Cardiac septum (tissue), 1 donor: ENCODE measurements at regions of chr6 and their contacts with region 1.

Region 1: GRCh38 chr6:138987640-138988468 is at the start of gene REPS1:
- DNase-seq: peak; percentile 95
- total RNA-seq, gene REPS1: 43.0 TPM

Region 2: DNA sequence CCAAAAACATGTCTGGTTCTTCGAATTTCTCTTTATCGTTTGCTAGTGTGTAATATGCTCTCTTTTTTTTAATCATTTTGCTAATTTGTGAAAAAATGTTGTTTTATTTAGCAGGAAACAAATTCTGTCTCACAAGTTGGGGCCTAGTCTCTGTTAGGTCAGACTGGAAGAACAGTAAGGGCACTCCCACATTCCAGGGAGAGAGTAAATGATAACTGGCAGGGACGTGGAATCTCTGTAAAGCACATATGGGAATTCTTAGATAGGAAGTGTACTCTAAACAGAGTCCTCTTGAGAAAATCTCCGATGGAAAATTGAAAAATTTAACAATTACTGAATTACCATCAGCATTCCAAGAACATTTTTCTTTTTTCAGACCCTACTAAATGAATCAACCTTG is 230.7 kb before region 1 on chr6:
- intact Hi-C with region 1: no loop called
- DNase-seq: no peak

Region 3: DNA sequence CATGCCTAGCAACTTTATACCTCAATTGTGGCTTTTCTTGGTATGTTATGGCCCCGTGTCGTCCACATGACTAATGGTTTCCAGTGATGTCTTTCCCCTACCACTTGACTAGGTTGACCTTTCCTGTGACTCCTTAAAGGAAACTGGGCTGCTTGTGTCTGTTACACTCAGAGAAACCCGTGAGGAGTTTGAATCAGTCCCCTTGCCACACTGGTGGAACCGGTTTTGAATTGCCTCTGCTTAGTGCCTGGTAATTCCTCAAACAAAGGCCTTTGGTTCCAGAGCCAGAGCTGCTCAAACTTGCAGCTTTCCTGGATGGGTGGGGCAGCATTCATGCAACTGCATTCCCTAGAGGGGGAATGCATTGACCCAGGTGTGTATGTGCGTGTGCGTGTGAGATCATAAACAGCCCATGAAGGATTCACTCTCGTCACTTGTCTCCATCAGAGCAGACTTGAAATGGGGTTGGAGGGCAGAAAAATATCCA is 170.0 kb before region 1 on chr6:
- intact Hi-C with region 1: loop called (anchors 2 kb)
- DNase-seq: no peak

Region 4: DNA sequence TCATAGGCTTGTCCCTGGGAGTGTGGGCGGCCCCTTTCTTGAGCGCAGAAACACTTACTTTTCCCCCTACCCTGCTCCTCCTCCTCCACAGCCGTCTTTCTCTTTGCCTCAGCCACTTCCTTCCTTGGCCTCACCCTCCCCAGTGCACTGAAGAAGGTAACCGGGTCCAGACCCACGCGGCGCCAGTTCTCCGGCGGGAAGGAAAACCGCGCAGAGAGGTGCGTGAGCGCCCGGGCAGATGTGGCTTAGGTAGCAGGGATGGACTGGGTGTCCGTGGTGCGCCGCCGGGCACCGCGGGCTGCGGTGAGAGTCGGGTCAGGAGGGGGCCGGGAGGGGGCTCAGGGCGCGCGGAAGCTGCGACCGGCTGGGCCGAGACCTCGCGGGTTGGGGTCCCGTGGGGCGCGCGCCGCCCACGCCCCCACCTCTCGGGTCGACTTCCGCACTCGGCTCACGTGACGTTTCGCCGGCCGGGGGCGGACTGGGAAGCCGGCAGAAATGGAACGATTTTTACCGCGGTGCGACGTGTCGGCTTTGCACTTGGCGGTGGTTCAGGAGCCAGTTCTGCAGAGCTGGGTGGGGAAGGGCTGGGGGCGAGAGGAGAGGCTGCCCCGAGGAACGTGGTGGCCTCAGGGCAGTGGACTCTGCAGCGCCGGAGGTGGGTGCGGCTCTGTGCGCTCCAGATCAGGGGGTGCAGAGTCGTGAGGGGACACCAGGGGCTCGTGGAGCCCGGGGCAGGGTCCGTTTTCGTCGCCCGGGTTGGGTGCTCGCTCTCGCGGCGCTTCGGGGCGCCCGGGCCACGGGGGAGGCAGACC is 41.0 kb after region 1 on chr6 and contains the start of gene ABRACL:
- intact Hi-C with region 1: loop called (anchors 5 kb)
- DNase-seq: peak; percentile 86
- total RNA-seq, gene ABRACL: 5.7 TPM

Region 5: DNA sequence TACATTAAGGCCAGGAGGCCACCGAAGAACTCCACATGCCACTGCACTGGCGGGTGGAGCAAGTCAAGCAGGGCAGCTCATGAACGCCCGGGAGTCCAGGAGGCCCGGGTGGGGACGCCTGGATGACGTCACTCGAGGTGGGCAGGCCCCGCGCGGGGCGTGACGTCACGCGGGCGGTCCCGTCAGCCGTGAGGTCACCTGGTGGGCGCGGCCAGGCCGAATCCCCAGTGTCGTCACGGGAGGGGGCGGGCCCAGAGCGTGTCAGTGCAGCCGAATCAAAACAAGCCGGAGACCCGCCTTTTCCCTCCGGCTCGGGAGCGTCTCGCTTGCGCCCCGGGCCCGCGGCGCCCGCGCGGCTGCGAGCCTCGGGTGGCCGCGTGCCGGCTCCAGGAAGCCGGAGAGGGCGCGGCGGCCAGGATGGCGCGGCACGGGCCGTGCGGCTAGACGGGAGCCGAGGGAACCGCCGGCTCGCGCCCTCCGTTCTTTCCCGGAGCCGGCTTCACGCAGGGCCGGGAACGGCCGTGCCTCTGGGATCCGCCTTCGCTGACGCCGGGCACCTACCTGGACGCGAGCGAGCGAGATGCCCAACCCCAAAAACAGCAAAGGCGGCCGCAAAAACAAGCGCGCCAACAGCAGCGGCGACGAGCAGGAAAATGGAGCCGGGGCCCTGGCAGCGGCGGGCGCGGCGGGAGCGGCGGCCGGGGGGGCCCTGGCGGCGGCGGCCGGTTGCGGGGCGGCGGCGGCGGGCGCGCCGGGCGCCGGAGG is 147.1 kb after region 1 on chr6 and contains the start of gene HECA:
- intact Hi-C with region 1: loop called (anchors 5 kb)
- DNase-seq: peak; percentile 100
- total RNA-seq, gene HECA: 51.0 TPM

Region 6: DNA sequence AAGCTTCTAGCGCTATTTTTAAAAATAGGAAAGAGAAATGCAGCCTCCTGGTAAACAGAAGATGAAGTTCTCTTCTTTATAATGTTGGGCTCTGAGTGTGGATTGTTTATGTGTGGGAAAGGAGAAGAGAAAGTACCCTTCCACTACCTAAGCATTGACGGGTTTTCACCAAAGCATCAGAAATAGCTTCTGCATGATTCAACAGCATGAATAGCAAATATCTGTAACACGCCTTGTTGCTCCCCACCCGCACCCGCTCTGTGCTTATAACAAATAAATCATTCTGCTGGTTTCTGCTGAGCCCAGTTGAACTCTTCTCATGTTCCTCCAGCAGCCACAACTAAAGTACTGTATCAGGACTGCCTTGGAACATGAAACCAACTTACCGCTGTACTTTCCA is 283.2 kb after region 1 on chr6:
- intact Hi-C with region 1: no loop called
- DNase-seq: no peak